CD4-positive, alpha-beta memory T cell (primary cell): ENCODE measurements at regions of chr15 and their contacts with region 1.

Region 1: DNA sequence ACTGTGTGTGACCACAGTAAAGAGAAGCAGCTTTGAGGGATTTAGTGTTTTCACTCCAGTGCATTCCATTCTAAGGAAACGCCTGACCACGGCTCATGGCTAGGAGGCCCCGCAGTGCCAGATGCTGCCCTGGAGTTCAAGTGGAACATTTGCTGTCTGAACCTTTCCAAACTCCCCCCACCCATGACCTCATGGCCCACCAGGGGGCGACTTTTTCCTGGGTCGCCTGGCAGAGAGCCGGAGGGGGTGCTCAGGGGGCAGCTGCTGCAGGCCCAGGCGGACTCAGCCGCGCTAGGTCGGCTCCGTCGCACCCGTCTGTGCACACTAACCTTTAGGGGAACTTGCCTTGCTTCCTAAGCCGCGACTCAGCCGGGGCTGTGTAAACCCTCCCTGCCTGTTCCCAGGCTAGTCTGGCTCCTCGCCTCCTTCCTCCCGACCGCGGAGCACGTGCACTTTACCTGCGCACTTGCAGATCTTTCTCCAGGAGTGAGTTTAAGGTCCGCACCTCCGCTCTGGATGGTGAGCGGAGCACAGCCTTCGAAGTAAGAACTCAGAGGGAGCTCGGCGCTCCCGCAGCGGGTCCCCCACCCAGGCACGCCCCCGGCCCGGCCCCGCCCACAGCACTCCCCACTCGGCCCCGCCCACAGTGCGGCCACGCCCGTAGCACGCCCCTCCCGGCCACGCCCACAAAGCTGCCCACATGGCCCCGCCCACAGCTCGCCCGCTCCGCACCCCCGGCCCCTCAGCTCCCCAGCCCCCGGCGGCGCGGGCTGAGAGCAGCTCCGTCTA is at the start of gene OCA2:
- DNase-seq: peak in 4 of 5 donors; percentile 45 to 55 (median 48)
- H3K4me3 ChIP-seq: no peak within 1 kb of the TSS
- H3K4me3 Mint-ChIP-seq: peak within 1 kb of the TSS; percentile 39 to 90 (median 62)
- H3K27ac ChIP-seq: no peak within 1 kb of the TSS
- H3K27ac Mint-ChIP-seq: peak within 1 kb of the TSS in 2 of 7 donors; percentile 26 to 62
- H3K4me1 ChIP-seq: peaks cover 40% of the 10 kb centered on the region
- H3K4me1 Mint-ChIP-seq: peaks cover 15 to 47% (median 35%) of the 10 kb centered on the region in 4 donors
- H3K27me3 ChIP-seq: peaks cover 33% of the 10 kb centered on the region
- H3K27me3 Mint-ChIP-seq: peaks cover 33 to 47% of the 10 kb centered on the region in 2 donors
- total RNA-seq, gene OCA2: not detected

Region 2: DNA sequence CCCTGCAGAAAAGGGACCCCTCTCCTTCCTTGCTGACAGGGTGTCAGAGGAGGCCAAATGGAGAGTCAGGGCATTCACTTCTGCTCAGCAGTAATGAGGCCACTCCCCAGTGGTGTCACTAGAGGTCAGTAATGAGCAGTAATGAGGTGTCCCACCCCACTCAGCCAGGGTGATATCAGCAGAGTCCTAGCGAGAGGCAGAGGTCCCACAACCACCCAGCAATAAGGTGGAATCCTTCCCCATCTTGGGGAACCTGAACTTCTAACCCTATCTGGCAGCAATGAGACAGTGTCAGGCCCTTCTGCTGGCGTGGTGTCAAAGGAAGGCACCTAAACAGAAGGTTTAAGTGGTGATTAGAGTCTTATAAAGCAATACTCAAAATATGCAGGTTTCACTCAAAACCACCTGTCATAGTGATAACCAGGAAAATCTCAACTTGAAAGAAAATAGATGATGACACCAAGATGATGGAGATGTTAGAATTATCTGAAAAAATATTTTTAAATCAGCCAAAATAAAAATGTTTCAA is 12.7 kb before region 1 on chr15:
- CTCF ChIA-PET with region 1: interaction called, 11 read pairs
- POLR2A ChIA-PET with region 1: interaction called, 3 read pairs
- intact Hi-C with region 1: no loop called
- DNase-seq: peak; percentile 44 to 61 (median 53)
- H3K4me3 ChIP-seq: no peak overlapping the region
- H3K4me3 Mint-ChIP-seq: no peak overlapping the region
- H3K27ac ChIP-seq: no peak overlapping the region
- H3K27ac Mint-ChIP-seq: no peak overlapping the region
- H3K4me1 ChIP-seq: no peaks in the 10 kb centered on the region
- H3K4me1 Mint-ChIP-seq: peaks cover 0 to 1% (median 0%) of the 10 kb centered on the region in 4 donors
- H3K27me3 ChIP-seq: no peaks in the 10 kb centered on the region
- H3K27me3 Mint-ChIP-seq: peaks cover 22 to 33% of the 10 kb centered on the region in 2 donors